WTC11 (cell line): ENCODE measurements at regions of chr4 and their contacts with region 1.

Region 1: DNA sequence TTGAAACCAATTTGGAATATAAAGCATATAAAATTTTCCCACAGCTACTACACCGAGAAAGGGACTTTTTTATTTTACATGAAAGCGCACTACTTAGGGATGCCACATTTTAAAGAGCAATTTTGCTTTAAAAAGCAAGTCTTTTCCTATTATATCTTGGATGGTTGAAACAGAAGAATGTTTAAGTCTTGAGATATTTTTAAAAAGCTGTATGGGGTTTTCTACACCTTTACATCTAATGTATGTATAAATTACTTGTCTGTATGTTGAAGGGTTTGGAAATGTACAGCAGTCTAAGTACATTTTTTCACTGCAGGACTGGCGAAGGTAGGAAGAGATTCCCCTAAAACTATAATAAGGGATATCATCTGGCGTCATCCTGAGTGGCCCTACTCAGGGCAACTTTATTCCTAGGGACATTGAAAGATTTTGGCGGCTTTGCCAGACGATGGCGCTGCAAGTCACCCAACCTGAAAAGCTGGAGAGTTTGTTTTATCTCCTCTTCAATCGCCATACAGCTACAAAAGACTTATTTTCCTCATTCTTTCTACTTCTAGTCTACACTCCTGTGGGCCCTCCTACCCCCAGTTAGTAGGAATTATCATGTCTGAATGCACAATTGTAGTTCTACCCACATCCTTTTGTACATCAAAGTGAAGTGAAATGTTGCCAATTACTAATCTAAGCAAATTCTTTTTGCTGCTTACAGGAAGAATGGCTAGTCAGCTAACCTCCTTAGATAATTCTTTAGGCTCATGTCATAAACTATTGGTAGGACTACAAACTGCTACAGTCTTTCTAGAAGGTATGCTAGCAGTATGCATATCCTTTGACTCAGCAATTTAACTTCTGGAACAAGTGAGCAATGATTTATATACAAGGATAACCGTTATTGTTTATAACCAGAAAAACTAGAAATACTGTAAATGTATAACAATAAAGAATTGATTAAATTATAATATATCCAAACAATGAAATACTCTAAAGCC is 782 bp upstream of the NEK1 start:
- DNase-seq: peak; percentile 77
- ATAC-seq: peak; percentile 60
- H3K4me3 Mint-ChIP-seq: peak overlapping the region; percentile 87
- H3K27ac Mint-ChIP-seq: peak overlapping the region; percentile 96
- H3K4me1 Mint-ChIP-seq: peaks cover 18% of the 10 kb centered on the region
- H3K27me3 Mint-ChIP-seq: no peaks in the 10 kb centered on the region
- CTCF ChIP-seq: no peak; the same call in 1 of the 2 replicates

Region 2: GRCh38 chr4:169659716-169660670 is 46.8 kb after region 1 on chr4:
- CTCF ChIA-PET with region 1: interaction called, 11 read pairs
- POLR2A ChIA-PET with region 1: interaction called, 3 read pairs
- DNase-seq: peak; percentile 36
- ATAC-seq: peak; percentile 96
- H3K4me3 Mint-ChIP-seq: peak overlapping the region; percentile 68
- H3K27ac Mint-ChIP-seq: peak overlapping the region; percentile 92
- H3K4me1 Mint-ChIP-seq: peaks cover 29% of the 10 kb centered on the region
- H3K27me3 Mint-ChIP-seq: no peaks in the 10 kb centered on the region
- CTCF ChIP-seq: no peak

Region 3: GRCh38 chr4:169723207-169723965 is 110.2 kb after region 1 on chr4:
- CTCF ChIA-PET with region 1: interaction called, 18 read pairs
- POLR2A ChIA-PET with region 1: no interaction called
- DNase-seq: no peak
- ATAC-seq: peak; percentile 41; the same call in 1 of the 2 replicates
- H3K4me3 Mint-ChIP-seq: no peak overlapping the region
- H3K27ac Mint-ChIP-seq: no peak overlapping the region
- H3K4me1 Mint-ChIP-seq: no peaks in the 10 kb centered on the region
- H3K27me3 Mint-ChIP-seq: no peaks in the 10 kb centered on the region
- CTCF ChIP-seq: no peak

Region 4: GRCh38 chr4:169774466-169775445 is 161.6 kb after region 1 on chr4:
- CTCF ChIA-PET with region 1: interaction called, 10 read pairs
- POLR2A ChIA-PET with region 1: interaction called, 5 read pairs
- DNase-seq: peak; percentile 71
- ATAC-seq: peak; percentile 77
- H3K4me3 Mint-ChIP-seq: peak overlapping the region; percentile 74
- H3K27ac Mint-ChIP-seq: no peak overlapping the region
- H3K4me1 Mint-ChIP-seq: peaks cover 11% of the 10 kb centered on the region
- H3K27me3 Mint-ChIP-seq: peaks cover 24% of the 10 kb centered on the region
- CTCF ChIP-seq: no peak

Region 5: GRCh38 chr4:169791527-169792156 is 178.5 kb after region 1 on chr4:
- CTCF ChIA-PET with region 1: interaction called, 11 read pairs
- POLR2A ChIA-PET with region 1: no interaction called
- DNase-seq: peak; percentile 66
- ATAC-seq: peak; percentile 94
- H3K4me3 Mint-ChIP-seq: peak overlapping the region; percentile 60
- H3K27ac Mint-ChIP-seq: no peak overlapping the region
- H3K4me1 Mint-ChIP-seq: peaks cover 10% of the 10 kb centered on the region
- H3K27me3 Mint-ChIP-seq: peaks cover 29% of the 10 kb centered on the region
- CTCF ChIP-seq: no peak

Region 6: GRCh38 chr4:169810325-169811323 is 197.5 kb after region 1 on chr4:
- CTCF ChIA-PET with region 1: interaction called, 14 read pairs
- POLR2A ChIA-PET with region 1: no interaction called
- DNase-seq: no peak
- ATAC-seq: peak; percentile 69
- H3K4me3 Mint-ChIP-seq: no peak overlapping the region
- H3K27ac Mint-ChIP-seq: no peak overlapping the region
- H3K4me1 Mint-ChIP-seq: no peaks in the 10 kb centered on the region
- H3K27me3 Mint-ChIP-seq: no peaks in the 10 kb centered on the region
- CTCF ChIP-seq: peak; percentile 62

Region 7: DNA sequence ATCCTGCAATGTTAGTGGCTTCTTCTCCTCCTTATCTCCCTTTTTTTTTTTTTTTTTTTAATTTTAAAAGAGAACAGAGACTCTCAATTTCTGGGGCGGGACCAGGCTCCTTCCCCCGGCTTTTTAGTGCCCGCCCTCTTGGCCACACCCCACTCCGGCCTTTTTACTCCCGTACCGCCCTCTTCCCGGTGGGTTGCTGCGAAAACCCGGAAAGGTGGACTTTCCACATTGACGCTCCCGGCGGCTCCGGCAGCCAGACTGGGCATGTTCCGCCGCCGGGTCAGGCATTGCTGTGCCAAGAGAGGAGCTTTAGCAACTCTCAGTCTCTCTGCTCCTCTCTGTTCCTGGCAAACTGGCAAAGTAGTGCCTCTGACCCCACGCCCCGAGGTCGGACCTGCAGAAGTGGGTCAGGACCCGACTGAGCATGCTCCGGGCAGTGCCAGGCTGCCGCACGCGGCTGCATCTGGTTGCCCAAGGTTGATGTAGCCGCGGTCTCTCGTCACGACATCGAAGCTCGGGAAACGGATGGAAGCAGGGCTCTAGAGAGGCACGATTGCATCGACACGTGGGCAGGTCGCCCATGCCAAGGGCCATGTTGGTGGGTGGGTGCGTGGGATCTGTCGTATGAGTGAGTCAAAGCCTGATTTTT is 414.1 kb after region 1 on chr4:
- CTCF ChIA-PET with region 1: interaction called, 12 read pairs
- POLR2A ChIA-PET with region 1: no interaction called
- DNase-seq: peak; percentile 93
- ATAC-seq: peak; percentile 68
- H3K4me3 Mint-ChIP-seq: peak overlapping the region; percentile 85
- H3K27ac Mint-ChIP-seq: no peak overlapping the region
- H3K4me1 Mint-ChIP-seq: peaks cover 28% of the 10 kb centered on the region
- H3K27me3 Mint-ChIP-seq: peaks cover 50% of the 10 kb centered on the region
- CTCF ChIP-seq: no peak